HepG2 (cell line): ENCODE measurements at regions of chr14 and their contacts with region 1.

Region 1: GRCh38 chr14:32576088-32576795 is 247.1 kb downstream of the AKAP6 start:
- DNase-seq: peak; percentile 73
- ATAC-seq: peak; percentile 93
- H3K4me3 ChIP-seq: no peak overlapping the region
- H3K27ac ChIP-seq: no peak overlapping the region
- H3K4me1 ChIP-seq: peaks cover 11% of the 10 kb centered on the region
- H3K27me3 ChIP-seq: no peaks in the 10 kb centered on the region
- CTCF ChIP-seq: peak; percentile 92
- EP300 ChIP-seq: no peak
- POLR2A ChIP-seq: no peak
- RAD21 ChIP-seq: peak; percentile 84; the same call in 1 of the 2 replicates

Region 2: DNA sequence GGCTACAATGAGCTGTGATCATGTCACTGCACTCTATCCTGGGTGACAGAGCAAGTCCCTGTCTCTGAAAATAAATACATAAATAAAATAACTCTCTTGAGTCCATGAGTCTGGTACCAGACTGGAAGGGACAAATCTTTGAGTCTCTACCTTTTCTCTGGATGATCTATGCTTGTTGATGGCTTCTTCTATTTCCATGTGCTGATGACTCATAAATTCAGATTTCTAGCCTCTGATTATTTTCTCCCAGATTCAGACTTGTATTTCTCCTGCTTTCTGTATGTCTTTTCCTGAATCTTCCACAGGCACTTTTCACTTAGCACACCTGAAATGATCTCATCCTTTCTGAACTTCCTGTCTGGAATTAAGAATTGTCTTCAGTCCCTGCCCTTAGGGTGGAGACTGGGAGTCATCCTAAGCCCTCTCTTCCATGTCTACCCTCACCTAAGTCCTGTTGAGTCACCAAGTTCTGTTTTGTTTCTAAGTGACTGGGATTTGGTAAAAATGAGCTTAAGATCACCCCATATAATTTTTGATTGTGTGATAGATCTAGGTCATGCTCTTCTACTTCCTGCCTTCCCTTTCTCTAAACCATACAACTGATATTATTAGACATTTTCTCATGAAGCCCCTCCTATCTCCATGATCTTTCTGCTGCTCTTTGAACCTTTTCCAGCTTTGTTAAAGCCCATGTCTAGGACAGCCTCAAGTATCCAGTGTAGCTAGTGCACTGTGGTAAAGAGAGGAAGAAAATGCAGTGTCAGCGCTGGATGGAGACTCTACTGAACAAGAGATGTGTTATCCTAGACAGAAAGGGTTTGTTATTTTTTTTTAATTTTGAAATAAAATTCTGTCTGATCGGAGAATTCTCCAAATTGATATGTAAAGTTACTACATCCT is 234.0 kb before region 1 on chr14:
- CTCF ChIA-PET with region 1: no interaction called
- POLR2A ChIA-PET with region 1: no interaction called
- in situ Hi-C with region 1: no loop called
- intact Hi-C with region 1: no loop called
- DNase-seq: no peak
- ATAC-seq: peak; percentile 42; the same call in 2 of the 3 replicates
- H3K4me3 ChIP-seq: no peak overlapping the region
- H3K27ac ChIP-seq: no peak overlapping the region
- H3K4me1 ChIP-seq: peaks cover 6% of the 10 kb centered on the region; the same call in 1 of the 2 replicates
- H3K27me3 ChIP-seq: no peaks in the 10 kb centered on the region
- CTCF ChIP-seq: no peak
- EP300 ChIP-seq: no peak
- POLR2A ChIP-seq: no peak
- RAD21 ChIP-seq: no peak

Region 3: GRCh38 chr14:32998433-32998832 is 422.2 kb after region 1 on chr14:
- CTCF ChIA-PET with region 1: no interaction called
- POLR2A ChIA-PET with region 1: no interaction called
- in situ Hi-C with region 1: no loop called
- intact Hi-C with region 1: loop called (anchors 5 kb)
- DNase-seq: no peak
- ATAC-seq: no peak
- H3K4me3 ChIP-seq: no peak overlapping the region
- H3K27ac ChIP-seq: no peak overlapping the region
- H3K4me1 ChIP-seq: no peaks in the 10 kb centered on the region
- H3K27me3 ChIP-seq: no peaks in the 10 kb centered on the region; a peak in 1 of 5 replicates
- CTCF ChIP-seq: no peak
- EP300 ChIP-seq: no peak
- POLR2A ChIP-seq: no peak
- RAD21 ChIP-seq: no peak

Region 4: GRCh38 chr14:33432407-33433023 is 856.3 kb after region 1 on chr14:
- CTCF ChIA-PET with region 1: interaction called, 13 read pairs
- POLR2A ChIA-PET with region 1: no interaction called
- in situ Hi-C with region 1: loop called (anchors 5 kb)
- intact Hi-C with region 1: loop called (anchors 1 kb)
- DNase-seq: peak; percentile 42
- ATAC-seq: peak; percentile 69
- H3K4me3 ChIP-seq: no peak overlapping the region
- H3K27ac ChIP-seq: no peak overlapping the region
- H3K4me1 ChIP-seq: no peaks in the 10 kb centered on the region
- H3K27me3 ChIP-seq: no peaks in the 10 kb centered on the region; a peak in 1 of 5 replicates
- CTCF ChIP-seq: peak; percentile 32
- EP300 ChIP-seq: no peak
- POLR2A ChIP-seq: no peak
- RAD21 ChIP-seq: no peak

Region 5: DNA sequence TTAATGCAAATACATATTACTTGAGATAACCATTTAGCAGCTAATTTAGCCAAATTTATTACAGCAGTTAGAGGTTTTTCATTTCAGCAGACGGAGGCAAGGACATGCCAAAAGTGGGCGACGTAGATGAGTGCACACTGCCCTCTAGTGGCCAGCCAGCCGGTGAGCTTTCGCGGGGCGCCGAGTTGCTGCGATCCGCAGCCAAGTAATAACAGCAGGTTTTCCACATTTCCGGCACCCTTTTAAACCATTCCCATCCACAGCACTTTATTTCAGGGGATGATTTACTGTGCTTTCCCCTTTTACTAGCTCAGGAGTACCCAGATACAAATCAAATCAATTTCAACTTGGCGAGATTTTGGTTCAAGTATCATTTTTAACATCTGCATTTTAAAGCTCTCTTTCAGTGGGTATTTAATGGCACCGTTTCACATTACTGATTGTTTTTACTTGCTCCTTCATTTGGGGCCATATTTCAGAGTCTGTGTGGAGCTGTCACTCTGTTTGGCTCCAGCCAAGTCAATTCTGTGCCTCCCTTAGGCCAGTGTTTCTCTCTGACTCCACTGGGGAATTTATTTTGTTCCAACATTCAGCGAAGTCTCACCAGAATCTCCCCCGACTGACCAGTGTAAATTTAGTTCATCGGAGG is 1216.6 kb after region 1 on chr14:
- CTCF ChIA-PET with region 1: interaction called, 62 read pairs
- POLR2A ChIA-PET with region 1: no interaction called
- in situ Hi-C with region 1: loop called (anchors 5 kb)
- intact Hi-C with region 1: loop called (anchors 1 kb)
- DNase-seq: peak; percentile 72
- ATAC-seq: peak; percentile 96
- H3K4me3 ChIP-seq: no peak overlapping the region
- H3K27ac ChIP-seq: no peak overlapping the region
- H3K4me1 ChIP-seq: 0 out of 2 replicates have a peak, but pooled peaks cover 4% of the 10 kb centered on the region
- H3K27me3 ChIP-seq: peaks cover 0 to 11% of the 10 kb centered on the region in 2 experiments; a peak in 2 of 5 replicates
- CTCF ChIP-seq: peak; percentile 97
- EP300 ChIP-seq: no peak
- POLR2A ChIP-seq: no peak
- RAD21 ChIP-seq: peak; percentile 94

Region 6: GRCh38 chr14:34098045-34098984 is 1522.1 kb after region 1 on chr14:
- CTCF ChIA-PET with region 1: interaction called, 8 read pairs
- POLR2A ChIA-PET with region 1: no interaction called
- in situ Hi-C with region 1: no loop called
- intact Hi-C with region 1: loop called (anchors 10 kb)
- DNase-seq: peak; percentile 68
- ATAC-seq: peak; percentile 66
- H3K4me3 ChIP-seq: 0 out of 6 replicates have a peak overlapping the region, but pooled peaks of 1 of the 3 experiments have one; percentile 0
- H3K27ac ChIP-seq: no peak overlapping the region
- H3K4me1 ChIP-seq: peaks cover 29% of the 10 kb centered on the region
- H3K27me3 ChIP-seq: peaks cover 0 to 33% of the 10 kb centered on the region in 2 experiments; a peak in 2 of 5 replicates
- CTCF ChIP-seq: peak; percentile 91
- EP300 ChIP-seq: no peak; a peak in 1 of 4 replicates
- POLR2A ChIP-seq: no peak
- RAD21 ChIP-seq: peak; percentile 95; the same call in 1 of the 2 replicates

Region 7: GRCh38 chr14:34300882-34301734 is 1724.9 kb after region 1 on chr14:
- CTCF ChIA-PET with region 1: no interaction called
- POLR2A ChIA-PET with region 1: no interaction called
- in situ Hi-C with region 1: no loop called
- intact Hi-C with region 1: loop called (anchors 5 kb)
- DNase-seq: peak; percentile 54
- ATAC-seq: peak; percentile 63
- H3K4me3 ChIP-seq: no peak overlapping the region
- H3K27ac ChIP-seq: no peak overlapping the region
- H3K4me1 ChIP-seq: peaks cover 9% of the 10 kb centered on the region
- H3K27me3 ChIP-seq: 0 out of 5 replicates have a peak, but pooled peaks cover 0 to 6% of the 10 kb centered on the region in 2 experiments
- CTCF ChIP-seq: peak; percentile 78
- EP300 ChIP-seq: no peak
- POLR2A ChIP-seq: no peak
- RAD21 ChIP-seq: peak; percentile 37; the same call in 1 of the 2 replicates